Activated CD4-positive, alpha-beta T cell treated with anti-CD3 and anti-CD28 coated beads for 36 hours (primary cell): ENCODE measurements at regions of chr14 and their contacts with region 1.

Region 1: GRCh38 chr14:94080471-94081289 is at the start of gene DDX24:
- DNase-seq: peak; percentile 98
- ATAC-seq: peak; percentile 97
- H3K4me3 Mint-ChIP-seq: peak within 1 kb of the TSS; percentile 99
- H3K27ac Mint-ChIP-seq: peak within 1 kb of the TSS; percentile 100
- H3K4me1 Mint-ChIP-seq: peaks cover 48% of the 10 kb centered on the region
- H3K27me3 Mint-ChIP-seq: no peaks in the 10 kb centered on the region
- total RNA-seq, gene DDX24: 259 to 390 TPM

Region 2: DNA sequence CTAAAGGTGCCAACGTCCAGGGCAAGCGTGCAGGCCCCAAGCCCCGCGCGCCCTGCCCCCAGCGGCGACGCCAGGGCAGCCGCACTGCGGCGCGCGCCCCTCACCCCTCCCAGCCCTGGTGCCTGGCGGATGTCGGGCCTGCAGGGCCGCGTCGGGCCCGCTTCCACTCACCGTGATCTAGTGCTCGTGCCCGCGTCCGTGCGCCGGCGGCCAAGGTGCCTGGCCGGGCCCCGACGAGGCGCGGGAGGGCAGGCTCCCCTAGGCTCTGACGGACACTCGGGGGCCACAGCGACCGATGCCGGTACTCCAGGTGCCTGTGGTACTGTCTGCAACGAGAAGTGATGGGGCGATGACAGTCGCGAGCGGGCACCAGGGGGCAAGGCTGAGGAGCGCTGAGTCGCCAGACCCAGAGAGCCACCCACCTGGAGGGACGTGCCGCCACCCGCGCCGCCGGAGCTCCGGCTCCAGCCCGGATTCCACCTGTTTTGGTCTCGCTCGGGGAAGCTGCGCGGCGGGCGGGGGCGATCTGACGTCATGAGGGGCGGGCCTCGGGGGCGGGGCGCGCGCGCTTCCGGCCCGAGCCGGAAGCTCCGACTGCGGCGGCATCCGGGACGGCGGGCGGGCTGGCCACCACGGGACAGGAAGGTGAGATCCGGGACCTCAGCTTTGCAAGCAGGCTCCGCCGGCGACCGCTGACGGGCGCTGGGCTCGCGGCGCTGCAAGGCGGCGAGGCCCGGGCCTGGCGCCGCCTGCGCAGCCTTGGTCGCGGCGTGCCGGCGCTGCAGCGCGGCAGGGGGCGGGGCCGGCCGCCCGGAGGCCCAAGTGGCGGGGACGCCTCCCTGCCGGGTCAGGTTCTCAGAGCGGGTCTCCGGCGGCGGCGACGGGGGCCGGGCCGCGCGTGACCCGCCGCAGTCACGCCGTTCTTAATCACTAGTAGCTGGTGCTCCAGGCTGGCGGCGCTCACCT is 896.0 kb before region 1 on chr14 and contains the starts of genes LYSET and MOAP1:
- CTCF ChIA-PET with region 1: no interaction called
- POLR2A ChIA-PET with region 1: no interaction called
- intact Hi-C with region 1: loop called in 1 of 2 experiments (anchors 1 kb)
- DNase-seq: peak; percentile 95
- ATAC-seq: peak; percentile 90
- H3K4me3 Mint-ChIP-seq: peak within 1 kb of the TSS; percentile 91
- H3K27ac Mint-ChIP-seq: peak within 1 kb of the TSS; percentile 93
- H3K4me1 Mint-ChIP-seq: peaks cover 40% of the 10 kb centered on the region
- H3K27me3 Mint-ChIP-seq: no peaks in the 10 kb centered on the region
- total RNA-seq, gene LYSET: 9.9 to 10.2 TPM
- total RNA-seq, gene MOAP1: 11.7 to 15.9 TPM

Region 3: GRCh38 chr14:93606091-93606490 is 474.6 kb before region 1 on chr14:
- CTCF ChIA-PET with region 1: no interaction called
- POLR2A ChIA-PET with region 1: no interaction called
- intact Hi-C with region 1: no loop called
- DNase-seq: no peak
- ATAC-seq: no peak
- H3K4me3 Mint-ChIP-seq: no peak overlapping the region
- H3K27ac Mint-ChIP-seq: no peak overlapping the region
- H3K4me1 Mint-ChIP-seq: no peaks in the 10 kb centered on the region
- H3K27me3 Mint-ChIP-seq: peaks cover 15% of the 10 kb centered on the region

Region 4: DNA sequence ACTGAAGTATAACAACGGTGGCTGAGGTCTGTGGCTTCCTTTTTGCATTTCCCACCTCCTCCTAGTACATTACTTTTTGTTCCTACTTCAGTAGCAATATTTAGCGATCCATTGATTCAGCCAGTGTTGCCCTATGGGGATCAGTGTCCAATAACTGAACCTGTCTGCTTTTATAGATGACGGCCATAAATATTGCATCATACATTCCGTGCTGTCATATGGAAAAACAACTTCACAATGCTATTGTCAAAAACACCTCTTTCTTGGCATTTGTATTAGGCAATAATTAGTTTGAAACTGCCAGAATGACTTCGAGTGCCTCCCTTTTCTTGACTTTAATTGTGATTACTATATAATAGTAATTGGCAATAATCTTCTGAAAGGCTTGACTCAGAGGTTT is 441.9 kb before region 1 on chr14:
- CTCF ChIA-PET with region 1: no interaction called
- POLR2A ChIA-PET with region 1: no interaction called
- intact Hi-C with region 1: no loop called
- DNase-seq: no peak
- ATAC-seq: no peak
- H3K4me3 Mint-ChIP-seq: no peak overlapping the region
- H3K27ac Mint-ChIP-seq: no peak overlapping the region
- H3K4me1 Mint-ChIP-seq: no peaks in the 10 kb centered on the region
- H3K27me3 Mint-ChIP-seq: peaks cover 31% of the 10 kb centered on the region

Region 5: GRCh38 chr14:93926873-93927799 is 153.5 kb before region 1 on chr14 and contains the start of gene FAM181A:
- CTCF ChIA-PET with region 1: no interaction called
- POLR2A ChIA-PET with region 1: no interaction called
- intact Hi-C with region 1: no loop called
- DNase-seq: no peak
- ATAC-seq: no peak
- H3K4me3 Mint-ChIP-seq: no peak within 1 kb of the TSS
- H3K27ac Mint-ChIP-seq: no peak within 1 kb of the TSS
- H3K4me1 Mint-ChIP-seq: no peaks in the 10 kb centered on the region
- H3K27me3 Mint-ChIP-seq: no peaks in the 10 kb centered on the region
- total RNA-seq, gene FAM181A: not detected

Region 6: GRCh38 chr14:93959239-93960107 is 121.2 kb before region 1 on chr14:
- CTCF ChIA-PET with region 1: no interaction called
- POLR2A ChIA-PET with region 1: no interaction called
- intact Hi-C with region 1: loop called in 1 of 2 experiments (anchors 5 kb)
- DNase-seq: peak; percentile 97
- ATAC-seq: peak; percentile 74
- H3K4me3 Mint-ChIP-seq: peak overlapping the region; percentile 70
- H3K27ac Mint-ChIP-seq: peak overlapping the region; percentile 100
- H3K4me1 Mint-ChIP-seq: peaks cover 96% of the 10 kb centered on the region
- H3K27me3 Mint-ChIP-seq: no peaks in the 10 kb centered on the region

Region 7: GRCh38 chr14:94066089-94066676 is 14.5 kb before region 1 on chr14:
- CTCF ChIA-PET with region 1: interaction called, 10 read pairs
- POLR2A ChIA-PET with region 1: interaction called, 7 read pairs
- intact Hi-C with region 1: no loop called
- DNase-seq: no peak
- ATAC-seq: peak; percentile 9
- H3K4me3 Mint-ChIP-seq: no peak overlapping the region
- H3K27ac Mint-ChIP-seq: peak overlapping the region; percentile 77
- H3K4me1 Mint-ChIP-seq: peaks cover 74% of the 10 kb centered on the region
- H3K27me3 Mint-ChIP-seq: no peaks in the 10 kb centered on the region

Region 8: DNA sequence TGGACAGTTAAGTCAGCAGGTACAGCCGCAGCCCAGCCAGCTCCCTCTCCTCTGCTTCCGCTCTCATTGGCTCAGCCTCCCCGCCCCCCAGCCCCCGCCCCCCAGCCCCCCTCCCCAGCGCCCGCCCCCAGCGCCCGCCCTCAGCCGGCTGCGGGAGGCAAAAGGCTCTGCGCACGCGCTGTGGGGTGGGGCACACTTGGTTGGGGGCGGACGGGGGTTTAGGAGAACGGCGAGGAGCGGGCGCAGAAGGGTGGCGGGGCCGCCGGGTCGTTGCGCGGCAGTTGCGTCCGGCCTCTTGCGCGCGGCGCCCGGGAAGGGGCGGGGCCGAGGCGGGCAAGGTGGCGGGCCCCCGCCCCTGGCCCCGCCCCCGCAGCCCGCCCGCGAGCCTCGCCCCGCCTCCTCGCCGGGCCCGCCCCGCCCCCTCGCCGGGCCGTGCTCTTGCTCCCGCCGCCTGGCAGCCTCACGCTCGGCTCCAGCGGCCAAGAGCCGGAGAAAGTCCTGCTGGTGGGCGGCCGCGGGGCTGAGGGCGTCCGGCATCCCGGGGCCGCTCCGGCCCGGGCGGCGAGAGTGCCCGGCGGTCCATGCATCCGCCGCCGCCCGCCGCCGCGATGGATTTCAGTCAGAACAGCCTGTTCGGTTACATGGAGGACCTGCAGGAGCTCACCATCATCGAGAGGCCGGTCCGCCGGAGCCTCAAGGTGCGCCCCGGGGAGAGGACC is 93.4 kb after region 1 on chr14 and contains the start of gene PPP4R4:
- CTCF ChIA-PET with region 1: interaction called, 3 read pairs
- POLR2A ChIA-PET with region 1: interaction called, 4 read pairs
- intact Hi-C with region 1: loop called (anchors 2 kb)
- DNase-seq: peak; percentile 96
- ATAC-seq: peak; percentile 89
- H3K4me3 Mint-ChIP-seq: peak within 1 kb of the TSS; percentile 81
- H3K27ac Mint-ChIP-seq: peak within 1 kb of the TSS; percentile 86
- H3K4me1 Mint-ChIP-seq: peaks cover 44% of the 10 kb centered on the region
- H3K27me3 Mint-ChIP-seq: peaks cover 5% of the 10 kb centered on the region
- total RNA-seq, gene PPP4R4: 21.4 TPM

Region 9: DNA sequence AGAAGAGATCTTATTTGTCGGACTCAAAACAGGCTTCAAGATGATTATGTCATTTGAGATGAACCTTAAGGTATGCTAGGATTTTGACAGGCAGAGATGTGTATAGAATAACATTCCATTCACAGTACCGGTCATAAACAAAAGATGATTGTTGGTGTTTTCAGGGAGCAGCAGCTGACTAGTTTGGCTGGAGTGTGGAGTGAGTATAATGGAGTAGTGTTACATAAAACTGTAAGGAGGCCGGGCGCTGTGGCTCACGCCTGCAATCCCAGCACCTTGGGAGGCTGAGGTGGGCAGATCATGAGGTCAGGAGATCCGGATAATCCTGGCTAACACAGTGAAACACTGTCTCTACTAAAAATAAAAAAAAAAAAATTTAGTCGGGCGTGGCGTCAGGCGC is 188.5 kb after region 1 on chr14:
- CTCF ChIA-PET with region 1: no interaction called
- POLR2A ChIA-PET with region 1: no interaction called
- intact Hi-C with region 1: no loop called
- DNase-seq: no peak
- ATAC-seq: no peak
- H3K4me3 Mint-ChIP-seq: no peak overlapping the region
- H3K27ac Mint-ChIP-seq: no peak overlapping the region
- H3K4me1 Mint-ChIP-seq: no peaks in the 10 kb centered on the region
- H3K27me3 Mint-ChIP-seq: peaks cover 10% of the 10 kb centered on the region

Region 10: DNA sequence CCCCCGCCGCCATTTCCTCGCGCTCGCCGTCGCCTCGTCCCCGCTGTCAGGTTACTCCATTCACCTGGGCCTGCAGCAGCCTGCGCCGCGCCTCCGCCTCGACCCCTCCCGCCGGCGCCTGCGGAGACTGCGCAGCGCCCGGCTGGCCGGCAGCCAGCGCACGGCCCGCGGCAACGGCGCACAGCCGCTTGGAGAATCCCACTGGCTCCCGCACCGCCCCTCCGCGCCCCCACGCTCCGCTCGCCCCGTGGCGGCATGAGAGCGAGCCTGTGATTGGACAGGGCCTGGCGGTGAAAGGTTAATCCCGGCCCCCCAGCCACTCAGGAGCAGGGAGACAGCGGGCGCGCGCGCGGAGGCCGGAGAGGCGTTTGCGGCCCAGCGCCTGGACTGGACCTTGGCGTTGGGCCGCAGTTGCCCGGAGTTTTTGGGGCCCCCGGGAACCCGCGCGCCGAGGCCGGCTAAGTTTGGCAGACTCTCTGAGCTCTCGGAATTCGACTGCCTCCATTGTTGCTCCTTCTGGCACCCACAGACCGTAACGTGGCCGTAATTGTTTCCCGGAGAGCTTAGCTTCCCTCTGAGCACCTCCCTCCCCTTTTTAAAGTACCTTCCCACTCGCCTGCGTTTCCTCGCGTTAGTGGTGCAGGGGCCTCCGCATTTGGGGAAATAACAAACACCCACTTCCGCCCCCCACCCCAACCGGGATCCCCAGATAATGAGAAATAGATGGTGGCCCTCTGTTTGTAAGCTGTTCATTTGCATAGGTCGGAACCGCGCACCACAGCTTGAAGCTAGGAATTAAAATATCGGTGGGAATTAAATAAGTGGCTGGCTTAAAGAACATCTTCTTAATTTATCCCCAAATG is 1076.9 kb after region 1 on chr14 and contains the start of gene DICER1:
- CTCF ChIA-PET with region 1: no interaction called
- POLR2A ChIA-PET with region 1: no interaction called
- intact Hi-C with region 1: loop called in 1 of 2 experiments (anchors 2 kb)
- DNase-seq: peak; percentile 97
- ATAC-seq: peak; percentile 83
- H3K4me3 Mint-ChIP-seq: peak within 1 kb of the TSS; percentile 95
- H3K27ac Mint-ChIP-seq: peak within 1 kb of the TSS; percentile 99
- H3K4me1 Mint-ChIP-seq: peaks cover 36% of the 10 kb centered on the region
- H3K27me3 Mint-ChIP-seq: no peaks in the 10 kb centered on the region
- total RNA-seq, gene DICER1: 41.6 to 61.1 TPM